Mammary epithelial cell (primary cell): ENCODE measurements at regions of chr16 and their contacts with region 1.

Region 1: GRCh38 chr16:50747207-50747956 is 5.5 kb downstream of the CYLD start:
- DNase-seq: peak; percentile 34
- H3K4me3 ChIP-seq: no peak overlapping the region
- H3K27ac ChIP-seq: no peak overlapping the region
- H3K4me1 ChIP-seq: peaks cover 22% of the 10 kb centered on the region
- H3K27me3 ChIP-seq: no peaks in the 10 kb centered on the region
- CTCF ChIP-seq: peak; percentile 23 to 45

Region 2: DNA sequence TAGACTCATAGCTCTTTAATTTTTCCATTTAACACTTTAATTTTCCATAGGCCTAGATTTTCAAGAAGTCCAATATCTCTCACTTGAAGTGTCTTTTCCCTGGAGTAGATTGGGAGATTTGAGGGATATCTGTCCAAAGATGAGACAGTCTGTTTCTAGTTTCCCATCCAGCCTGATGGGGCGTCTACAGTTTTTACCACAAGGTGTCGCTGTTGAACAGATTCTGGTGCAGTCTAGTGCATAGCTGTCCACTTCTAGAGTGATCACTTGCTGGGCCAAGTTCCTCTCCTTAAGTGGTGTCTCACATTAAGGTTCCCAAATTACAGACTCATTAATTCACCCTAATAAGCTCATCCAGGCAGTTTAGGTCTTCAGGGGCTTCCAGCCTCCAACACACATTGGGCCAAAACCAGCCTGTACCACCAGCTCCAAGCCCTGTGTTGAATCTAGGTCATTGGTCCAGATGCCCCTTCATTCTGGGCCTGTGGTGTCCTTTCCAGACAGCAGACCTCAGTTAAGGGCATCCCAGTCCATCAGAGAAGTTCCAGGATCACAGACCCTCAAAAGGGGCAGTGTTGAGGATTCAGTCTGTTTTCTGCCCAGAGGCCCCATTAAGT is 75.6 kb before region 1 on chr16:
- CTCF ChIA-PET with region 1: no interaction called
- dilution Hi-C with region 1: no loop called
- in situ Hi-C with region 1: loop called in 1 of 2 experiments (anchors 5 kb)
- intact Hi-C with region 1: loop called (anchors 1 kb)
- DNase-seq: peak; percentile 26
- H3K4me3 ChIP-seq: no peak overlapping the region
- H3K27ac ChIP-seq: no peak overlapping the region
- H3K4me1 ChIP-seq: no peaks in the 10 kb centered on the region
- H3K27me3 ChIP-seq: no peaks in the 10 kb centered on the region
- CTCF ChIP-seq: peak; percentile 70 to 72

Region 3: GRCh38 chr16:50763211-50763610 is 15.8 kb after region 1 on chr16:
- CTCF ChIA-PET with region 1: no interaction called
- dilution Hi-C with region 1: no loop called
- in situ Hi-C with region 1: no loop called
- intact Hi-C with region 1: loop called (anchors 2 kb)
- DNase-seq: peak; percentile 83
- H3K4me3 ChIP-seq: no peak overlapping the region
- H3K27ac ChIP-seq: peak overlapping the region; percentile 45
- H3K4me1 ChIP-seq: peaks cover 3% of the 10 kb centered on the region
- H3K27me3 ChIP-seq: no peaks in the 10 kb centered on the region
- CTCF ChIP-seq: no peak

Region 4: DNA sequence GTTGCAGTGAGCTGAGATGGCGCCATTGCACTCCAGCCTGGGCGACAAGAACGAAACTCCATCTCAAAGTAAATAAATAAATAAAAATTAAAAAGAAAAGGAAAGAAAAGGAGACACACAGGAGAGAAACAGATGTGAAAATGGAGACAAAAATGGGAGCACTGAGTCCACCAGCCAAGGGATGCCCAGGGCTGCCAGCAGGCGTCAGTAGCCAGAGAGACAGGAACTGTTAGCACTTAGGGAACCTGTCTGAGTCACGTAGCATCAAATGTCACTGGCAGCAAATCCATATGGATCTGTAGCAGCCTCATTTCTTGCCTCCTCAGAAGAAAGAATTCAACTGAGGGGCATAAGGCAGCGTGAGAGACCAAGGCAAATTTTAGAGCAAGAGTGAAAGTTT is 74.2 kb after region 1 on chr16:
- CTCF ChIA-PET with region 1: no interaction called
- dilution Hi-C with region 1: no loop called
- in situ Hi-C with region 1: no loop called
- intact Hi-C with region 1: no loop called
- DNase-seq: no peak
- H3K4me3 ChIP-seq: no peak overlapping the region
- H3K27ac ChIP-seq: no peak overlapping the region
- H3K4me1 ChIP-seq: no peaks in the 10 kb centered on the region
- H3K27me3 ChIP-seq: no peaks in the 10 kb centered on the region
- CTCF ChIP-seq: peak; percentile 14 to 28